Pancreas (tissue), 10 donors: ENCODE measurements at regions of chr18 and their contacts with region 1.

Region 1: DNA sequence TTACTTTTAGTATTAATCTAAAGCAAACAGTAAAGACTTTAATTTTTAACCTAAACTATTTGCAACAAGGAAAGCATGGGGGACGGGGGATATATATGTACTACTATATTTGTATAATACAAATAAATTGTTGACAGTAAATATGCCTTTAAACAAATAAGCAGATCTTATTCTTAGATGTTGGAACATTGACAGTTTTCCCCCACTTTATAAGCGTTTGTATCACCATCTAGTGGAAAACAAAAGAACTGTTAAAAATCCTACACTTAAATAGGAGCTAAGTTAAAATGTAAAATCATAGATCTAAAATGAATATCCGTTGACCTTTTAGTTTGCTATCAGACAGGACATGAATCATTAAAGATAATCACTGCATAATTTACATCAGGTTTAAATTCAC is 50.0 kb downstream of the RBBP8 start:
- DNase-seq: no peak
- ATAC-seq: peak in 3 of 4 donors; percentile 44 to 70 (median 63)
- H3K4me3 ChIP-seq: no peak overlapping the region
- H3K27ac ChIP-seq: no peak overlapping the region
- H3K4me1 ChIP-seq: peaks cover 0 to 5% (median 0%) of the 10 kb centered on the region in 3 donors
- H3K27me3 ChIP-seq: no peaks in the 10 kb centered on the region
- CTCF ChIP-seq: peak in 3 of 4 donors; percentile 24 to 38 (median 25)

Region 2: DNA sequence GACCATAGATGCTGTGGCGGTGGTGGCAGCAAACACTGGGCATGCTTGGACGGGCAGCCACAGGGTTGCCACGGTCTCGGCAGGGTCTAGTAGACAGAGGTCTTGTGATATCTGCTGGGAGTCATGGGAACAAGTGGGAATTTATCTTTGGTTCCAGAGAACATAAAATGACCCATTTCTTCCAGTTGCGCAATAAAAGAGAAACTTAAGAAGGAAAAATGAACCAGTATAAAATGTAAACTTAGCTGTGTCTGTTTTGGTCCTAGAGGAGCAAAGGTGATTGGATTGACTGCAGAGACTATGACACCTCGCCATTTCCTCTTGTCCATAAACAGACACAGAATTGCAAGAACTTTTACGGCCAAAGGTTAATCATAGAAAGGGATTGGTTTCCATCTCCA is 182.6 kb before region 1 on chr18:
- intact Hi-C with region 1: loop called in 1 of 3 experiments (anchors 10 kb)
- DNase-seq: no peak
- ATAC-seq: peak in 1 of 4 donors; percentile 23
- H3K4me3 ChIP-seq: no peak overlapping the region
- H3K27ac ChIP-seq: peak overlapping the region in 1 of 4 donors; percentile 11
- H3K4me1 ChIP-seq: no peaks in the 10 kb centered on the region
- H3K27me3 ChIP-seq: no peaks in the 10 kb centered on the region
- CTCF ChIP-seq: no peak

Region 3: DNA sequence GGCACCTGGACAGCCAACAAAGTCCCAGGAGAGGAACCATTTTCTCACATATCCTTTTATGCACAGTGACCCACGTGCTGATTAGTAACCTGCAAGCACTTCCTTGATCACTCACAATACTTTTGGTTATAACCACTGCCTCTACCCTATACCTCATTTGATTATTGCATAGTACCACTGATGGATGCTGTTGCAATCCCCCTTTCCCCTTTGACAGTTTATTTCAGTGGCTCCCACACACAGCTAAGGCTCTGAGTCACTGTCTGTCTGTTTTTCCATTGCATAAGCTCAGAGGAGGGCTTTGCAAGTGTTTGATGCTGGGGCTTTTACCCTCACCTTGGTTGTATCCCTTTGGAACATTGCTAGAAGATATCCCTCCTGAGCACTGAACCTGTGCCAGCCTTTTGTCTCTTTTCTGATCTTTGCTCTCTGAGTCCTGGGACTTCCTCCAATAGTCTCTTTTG is 151.7 kb before region 1 on chr18:
- intact Hi-C with region 1: loop called in 1 of 3 experiments (anchors 10 kb)
- DNase-seq: no peak
- ATAC-seq: peak in 2 of 4 donors; percentile 32 to 70
- H3K4me3 ChIP-seq: no peak overlapping the region
- H3K27ac ChIP-seq: no peak overlapping the region
- H3K4me1 ChIP-seq: no peaks in the 10 kb centered on the region
- H3K27me3 ChIP-seq: no peaks in the 10 kb centered on the region
- CTCF ChIP-seq: no peak

Region 4: GRCh38 chr18:23126376-23127056 is 143.3 kb after region 1 on chr18:
- intact Hi-C with region 1: no loop called
- DNase-seq: no peak
- ATAC-seq: no peak
- H3K4me3 ChIP-seq: no peak overlapping the region
- H3K27ac ChIP-seq: no peak overlapping the region
- H3K4me1 ChIP-seq: no peaks in the 10 kb centered on the region
- H3K27me3 ChIP-seq: no peaks in the 10 kb centered on the region
- CTCF ChIP-seq: no peak

Region 5: DNA sequence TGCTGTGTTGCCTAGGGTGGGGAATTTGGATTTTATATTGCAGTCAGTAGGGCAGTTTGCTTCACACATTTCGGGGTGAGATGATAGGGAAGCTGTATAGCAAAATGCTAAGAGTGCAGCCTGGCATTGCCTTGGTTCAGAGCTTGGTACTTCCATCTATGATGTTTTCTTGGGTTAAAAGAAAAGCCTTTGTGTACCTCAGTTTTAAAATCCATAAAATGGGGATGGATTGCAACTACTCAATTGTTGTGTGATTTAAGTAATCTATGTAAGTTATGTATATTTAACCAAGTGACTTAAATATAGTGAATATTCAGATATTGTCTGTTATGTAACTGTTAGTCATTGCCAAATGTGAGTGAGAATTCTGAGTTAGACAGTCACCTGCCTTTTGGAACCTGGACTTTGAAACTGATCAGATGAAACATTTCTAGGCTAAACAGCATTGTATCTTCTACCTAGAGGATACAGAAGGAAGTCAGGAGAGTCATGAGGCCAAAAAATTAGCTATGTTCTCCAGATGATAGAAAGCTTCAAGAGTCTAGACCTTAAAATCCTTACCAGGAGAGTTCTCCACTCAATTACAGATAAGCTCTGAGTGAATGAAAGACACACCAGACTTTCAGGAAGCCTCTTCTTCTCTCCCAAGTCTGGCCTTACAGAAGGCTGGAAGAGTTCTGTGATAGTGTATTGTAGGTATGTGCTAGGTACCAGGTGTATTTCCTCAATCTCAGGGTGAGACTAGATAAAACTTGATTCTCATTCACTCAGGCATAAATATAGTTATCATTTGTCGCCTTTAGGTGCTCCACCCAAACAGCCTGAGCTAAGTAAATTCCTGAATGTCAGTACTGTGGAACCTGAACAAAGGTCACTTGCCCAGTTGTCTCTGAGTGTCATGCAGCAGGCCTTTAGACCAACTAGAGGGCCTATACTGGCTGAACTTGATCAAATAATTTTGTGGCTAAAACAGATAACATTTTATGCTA is 477.4 kb after region 1 on chr18:
- intact Hi-C with region 1: no loop called
- DNase-seq: no peak
- ATAC-seq: peak; percentile 27 to 65 (median 32)
- H3K4me3 ChIP-seq: no peak overlapping the region
- H3K27ac ChIP-seq: no peak overlapping the region
- H3K4me1 ChIP-seq: peaks cover 6 to 48% (median 25%) of the 10 kb centered on the region in 3 donors
- H3K27me3 ChIP-seq: no peaks in the 10 kb centered on the region
- CTCF ChIP-seq: no peak